Activated CD8-positive, alpha-beta T cell treated with anti-CD3 and anti-CD28 coated beads, Interleukin-2, amount 10 ng/mL, durations not matched to agents 7 days and 5 days (primary cell): ENCODE measurements at regions of chr6 and their contacts with region 1.

Region 1: GRCh38 chr6:37018198-37019064 is 13.0 kb downstream of the FGD2 start:
- DNase-seq: peak; percentile 96
- ATAC-seq: peak; percentile 95
- H3K4me3 Mint-ChIP-seq: no peak overlapping the region
- H3K27ac Mint-ChIP-seq: peak overlapping the region; percentile 62
- H3K4me1 Mint-ChIP-seq: peaks cover 56% of the 10 kb centered on the region
- H3K27me3 Mint-ChIP-seq: no peaks in the 10 kb centered on the region

Region 2: GRCh38 chr6:36780442-36781177 is 237.8 kb before region 1 on chr6:
- CTCF ChIA-PET with region 1: interaction called, 13 read pairs
- POLR2A ChIA-PET with region 1: interaction called, 3 read pairs
- DNase-seq: no peak
- ATAC-seq: no peak
- H3K4me3 Mint-ChIP-seq: no peak overlapping the region
- H3K27ac Mint-ChIP-seq: peak overlapping the region; percentile 57
- H3K4me1 Mint-ChIP-seq: peaks cover 38% of the 10 kb centered on the region
- H3K27me3 Mint-ChIP-seq: peaks cover 11% of the 10 kb centered on the region

Region 3: DNA sequence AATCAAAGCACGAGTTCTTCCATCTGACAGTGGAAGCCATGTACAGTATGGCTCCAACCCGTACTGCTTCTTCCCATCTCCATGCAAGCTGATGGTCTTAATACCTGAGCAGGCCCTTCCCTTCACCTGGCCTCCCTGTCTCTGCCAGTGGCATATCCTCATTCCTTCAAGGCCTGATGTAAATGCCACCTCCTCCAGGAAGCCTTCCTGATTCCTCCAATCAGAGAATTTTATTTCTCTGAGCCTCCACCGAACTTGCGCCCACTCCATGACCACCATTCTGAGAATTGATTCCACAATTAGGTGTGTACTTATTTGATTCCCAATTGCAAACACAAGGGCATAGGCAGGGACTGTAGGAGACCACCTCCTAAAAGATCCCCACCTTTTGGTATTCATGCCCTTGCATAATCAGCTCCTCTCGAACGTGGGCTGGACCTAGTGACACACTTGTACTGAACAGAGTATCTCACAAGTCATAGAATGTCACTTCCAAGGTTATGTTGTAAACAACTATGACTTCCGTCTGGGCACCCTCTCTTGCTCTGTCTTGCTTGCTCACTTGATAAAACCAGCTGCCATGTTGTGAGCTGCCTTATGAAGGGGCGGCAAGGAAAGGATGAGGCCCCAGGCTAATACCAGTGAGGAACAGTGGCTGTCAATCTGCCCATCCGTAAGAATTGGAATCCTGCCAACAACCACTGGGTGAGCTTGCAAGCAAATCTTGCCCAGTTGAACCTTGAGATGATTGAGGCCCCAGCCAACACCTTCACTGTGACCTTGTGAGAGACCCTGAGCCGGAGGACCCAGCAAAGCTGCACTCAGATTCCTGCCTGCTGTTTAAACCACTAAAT is 218.0 kb before region 1 on chr6:
- CTCF ChIA-PET with region 1: no interaction called
- POLR2A ChIA-PET with region 1: no interaction called
- DNase-seq: no peak
- ATAC-seq: no peak
- H3K4me3 Mint-ChIP-seq: no peak overlapping the region
- H3K27ac Mint-ChIP-seq: no peak overlapping the region
- H3K4me1 Mint-ChIP-seq: peaks cover 4% of the 10 kb centered on the region
- H3K27me3 Mint-ChIP-seq: peaks cover 16% of the 10 kb centered on the region

Region 4: DNA sequence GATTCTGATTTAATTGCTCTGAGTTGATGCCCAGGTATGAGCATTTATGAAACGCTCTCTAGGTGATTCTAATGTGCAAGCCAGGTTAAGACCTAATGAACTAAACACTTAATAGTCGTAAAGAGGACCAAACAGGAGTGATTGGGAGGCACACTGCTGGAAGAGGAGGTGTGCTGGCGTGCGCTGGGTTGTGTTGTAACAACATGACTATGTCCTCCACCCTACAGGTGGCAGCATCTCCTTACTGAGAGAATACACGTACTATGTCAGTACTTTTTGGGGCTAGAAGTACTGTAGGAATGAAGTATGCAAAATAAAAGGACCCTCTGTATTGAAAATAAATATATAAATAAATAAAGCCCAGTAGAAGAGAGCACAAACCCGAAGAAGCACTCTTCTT is 120.8 kb before region 1 on chr6:
- CTCF ChIA-PET with region 1: interaction called, 33 read pairs
- POLR2A ChIA-PET with region 1: no interaction called
- DNase-seq: peak; percentile 53
- ATAC-seq: peak; percentile 70
- H3K4me3 Mint-ChIP-seq: no peak overlapping the region
- H3K27ac Mint-ChIP-seq: no peak overlapping the region
- H3K4me1 Mint-ChIP-seq: peaks cover 7% of the 10 kb centered on the region
- H3K27me3 Mint-ChIP-seq: no peaks in the 10 kb centered on the region

Region 5: DNA sequence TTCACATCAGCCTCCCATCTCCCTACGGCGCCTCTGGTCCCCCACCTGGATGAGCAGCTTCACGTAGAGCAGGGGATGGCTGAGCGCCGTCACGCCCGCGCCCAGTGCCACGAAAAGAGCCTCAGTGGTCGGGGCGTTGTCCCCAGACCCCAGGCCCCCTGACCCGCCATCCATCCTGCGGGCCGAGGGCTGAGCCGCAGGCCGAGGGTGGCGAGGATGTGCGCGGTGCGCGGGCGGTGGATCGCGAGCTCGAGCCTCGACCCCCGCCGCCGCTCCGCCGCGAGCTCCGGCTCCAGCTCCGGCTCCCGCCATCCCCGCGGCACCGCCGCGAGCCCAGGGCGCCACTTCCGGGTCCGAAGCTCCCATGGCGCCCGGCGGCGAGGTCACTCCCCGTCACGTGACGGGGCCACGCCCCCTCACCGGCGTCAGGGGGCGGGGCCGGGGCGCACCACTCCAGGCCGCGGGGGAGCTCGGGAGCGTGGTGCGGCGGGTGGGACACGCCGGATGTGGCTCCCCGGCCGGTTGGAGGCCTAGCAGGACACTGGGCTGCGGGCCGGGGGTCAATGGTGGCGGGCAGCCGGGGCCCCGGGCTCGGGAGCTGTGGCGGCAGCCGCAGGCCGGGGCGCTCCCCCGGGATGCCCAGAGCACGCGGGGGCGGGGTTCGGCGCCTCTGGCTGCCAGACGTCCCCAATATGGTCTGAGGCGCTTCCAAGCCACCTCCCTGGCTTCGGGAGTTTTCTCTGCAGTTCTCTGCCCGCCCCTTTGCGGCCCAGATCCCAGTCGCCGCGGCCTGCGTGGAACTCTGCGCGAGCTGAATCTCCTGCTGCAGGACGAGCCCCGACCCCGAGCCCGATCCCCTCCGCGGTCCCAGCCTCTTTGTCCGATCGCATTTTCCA is 32.4 kb before region 1 on chr6 and contains the start of gene MTCH1:
- CTCF ChIA-PET with region 1: interaction called, 70 read pairs
- POLR2A ChIA-PET with region 1: interaction called, 10 read pairs
- DNase-seq: peak; percentile 89
- ATAC-seq: peak; percentile 92
- H3K4me3 Mint-ChIP-seq: peak within 1 kb of the TSS; percentile 98
- H3K27ac Mint-ChIP-seq: peak within 1 kb of the TSS; percentile 96
- H3K4me1 Mint-ChIP-seq: peaks cover 25% of the 10 kb centered on the region
- H3K27me3 Mint-ChIP-seq: peaks cover 12% of the 10 kb centered on the region
- total RNA-seq, gene MTCH1: 117 to 122 TPM

Region 6: DNA sequence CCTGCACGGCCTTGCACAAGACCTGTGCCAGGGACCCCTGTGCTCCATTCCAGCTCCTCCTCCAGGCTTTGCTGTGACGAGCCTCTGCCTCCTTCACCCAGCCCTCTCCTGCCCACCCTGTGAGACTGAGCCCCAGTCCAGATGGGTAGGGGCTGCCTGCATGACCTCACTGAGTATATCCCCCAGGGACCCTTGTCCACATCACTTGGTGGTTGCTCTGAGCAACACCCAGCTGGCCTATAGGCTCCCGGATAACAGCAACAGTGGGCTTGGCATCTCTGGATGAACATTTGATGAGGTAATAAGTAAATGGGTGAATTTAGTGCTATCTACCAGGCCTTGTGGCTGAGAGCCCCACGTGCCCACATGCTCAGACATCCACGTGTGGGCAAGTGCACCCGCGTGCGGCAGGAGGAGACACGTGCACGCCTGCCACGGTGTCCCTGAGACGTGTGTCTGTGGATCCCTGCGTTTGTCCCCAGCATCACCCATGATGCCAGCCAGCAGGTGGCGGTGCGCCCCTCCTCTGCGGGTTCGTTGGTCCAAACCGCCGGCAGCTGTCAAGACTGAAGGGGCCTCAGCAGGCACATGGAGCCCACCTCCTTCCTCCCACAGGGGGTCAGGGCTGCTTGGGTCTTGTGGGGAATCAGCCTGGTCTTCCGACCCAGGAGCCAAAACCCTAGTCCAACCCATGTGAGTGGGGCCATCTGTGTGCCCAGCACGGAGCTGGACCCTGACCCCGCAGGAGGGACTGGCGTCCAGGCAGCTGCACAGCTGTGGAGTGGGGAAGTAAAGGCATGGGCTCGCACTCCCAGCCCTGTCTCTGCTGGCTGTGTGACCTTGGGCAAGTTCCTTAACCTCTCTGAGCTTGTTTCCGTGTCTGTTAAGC is 33.0 kb after region 1 on chr6:
- CTCF ChIA-PET with region 1: interaction called, 506 read pairs
- POLR2A ChIA-PET with region 1: interaction called, 87 read pairs
- DNase-seq: peak; percentile 95
- ATAC-seq: peak; percentile 62
- H3K4me3 Mint-ChIP-seq: peak overlapping the region; percentile 80
- H3K27ac Mint-ChIP-seq: peak overlapping the region; percentile 89
- H3K4me1 Mint-ChIP-seq: peaks cover 76% of the 10 kb centered on the region
- H3K27me3 Mint-ChIP-seq: no peaks in the 10 kb centered on the region

Region 7: GRCh38 chr6:37190159-37190535 is 171.7 kb after region 1 on chr6:
- CTCF ChIA-PET with region 1: interaction called, 23 read pairs
- POLR2A ChIA-PET with region 1: interaction called, 6 read pairs
- DNase-seq: no peak
- ATAC-seq: peak; percentile 45
- H3K4me3 Mint-ChIP-seq: peak overlapping the region; percentile 12
- H3K27ac Mint-ChIP-seq: peak overlapping the region; percentile 85
- H3K4me1 Mint-ChIP-seq: peaks cover 76% of the 10 kb centered on the region
- H3K27me3 Mint-ChIP-seq: no peaks in the 10 kb centered on the region

Region 8: DNA sequence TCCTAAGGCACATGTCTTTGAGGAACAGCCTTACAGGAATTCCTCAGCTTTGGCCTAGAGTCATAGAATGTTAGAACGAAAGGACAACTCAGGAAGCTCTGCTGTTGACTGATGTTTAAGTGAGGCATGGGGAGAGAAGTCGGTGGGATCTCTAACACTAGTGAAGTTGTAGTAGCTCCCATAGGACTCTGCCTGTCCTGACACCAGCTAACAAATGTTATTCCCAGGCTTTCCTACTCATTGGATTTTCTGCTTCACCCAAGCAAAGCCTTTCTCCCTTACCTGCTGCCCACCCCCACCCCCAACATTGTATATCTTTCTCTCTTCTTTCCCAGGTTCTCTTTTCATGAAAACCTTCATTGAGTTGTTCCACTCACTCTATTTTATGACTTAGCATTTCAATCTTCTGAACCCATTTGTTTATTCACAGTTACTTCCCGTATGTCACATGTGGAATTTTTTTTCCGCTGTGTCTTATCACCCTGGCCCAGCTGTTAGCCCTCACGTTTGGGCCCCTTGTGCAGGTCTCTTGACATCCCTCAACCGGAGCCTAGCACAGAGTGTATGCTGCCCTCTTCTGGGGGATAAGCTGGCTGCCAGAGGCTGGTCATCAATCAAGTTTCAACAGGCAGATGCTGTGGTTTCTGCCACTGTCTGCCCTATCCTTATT is 296.2 kb after region 1 on chr6:
- CTCF ChIA-PET with region 1: interaction called, 106 read pairs
- POLR2A ChIA-PET with region 1: no interaction called
- DNase-seq: peak; percentile 71
- ATAC-seq: peak; percentile 84
- H3K4me3 Mint-ChIP-seq: no peak overlapping the region
- H3K27ac Mint-ChIP-seq: no peak overlapping the region
- H3K4me1 Mint-ChIP-seq: peaks cover 20% of the 10 kb centered on the region
- H3K27me3 Mint-ChIP-seq: no peaks in the 10 kb centered on the region